ENCODE measurements at regions of chr18 and their contacts with region 1.

Region 1: DNA sequence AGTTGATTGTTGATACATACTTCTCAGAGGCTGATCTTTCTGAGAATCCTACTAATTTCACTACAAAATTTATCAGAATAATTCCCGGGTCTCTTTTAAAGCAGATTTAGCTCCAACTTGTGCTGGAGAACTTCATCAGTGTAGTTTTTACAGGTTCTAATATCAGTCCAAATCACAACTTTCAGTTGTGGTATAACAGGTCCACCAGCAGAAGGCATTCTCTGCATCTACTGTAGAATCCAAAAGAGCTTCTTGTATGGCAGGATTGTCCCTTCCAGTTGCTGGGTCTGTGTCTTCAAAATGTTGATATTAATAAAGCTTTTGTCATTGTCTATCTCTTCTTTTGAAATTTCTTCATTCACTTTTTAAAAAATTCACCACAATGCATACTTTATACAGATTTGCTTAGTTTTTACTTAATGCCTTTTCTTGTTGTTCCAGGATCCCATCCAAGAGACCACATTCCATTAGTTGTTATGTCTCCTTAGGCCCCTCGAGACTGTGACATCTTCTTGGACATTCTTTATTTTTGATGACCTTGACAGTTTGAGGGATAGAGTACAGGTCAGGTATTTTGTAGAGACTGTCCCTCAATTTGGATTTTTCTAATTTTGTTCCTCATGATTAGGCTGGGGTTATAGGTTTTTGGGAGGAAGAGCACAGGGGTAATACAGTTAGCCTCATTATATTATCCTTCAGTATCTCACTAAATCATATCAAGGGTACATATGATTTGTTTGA is 490.5 kb upstream of the MEX3C start:
- DNase-seq: no peak

Region 2: DNA sequence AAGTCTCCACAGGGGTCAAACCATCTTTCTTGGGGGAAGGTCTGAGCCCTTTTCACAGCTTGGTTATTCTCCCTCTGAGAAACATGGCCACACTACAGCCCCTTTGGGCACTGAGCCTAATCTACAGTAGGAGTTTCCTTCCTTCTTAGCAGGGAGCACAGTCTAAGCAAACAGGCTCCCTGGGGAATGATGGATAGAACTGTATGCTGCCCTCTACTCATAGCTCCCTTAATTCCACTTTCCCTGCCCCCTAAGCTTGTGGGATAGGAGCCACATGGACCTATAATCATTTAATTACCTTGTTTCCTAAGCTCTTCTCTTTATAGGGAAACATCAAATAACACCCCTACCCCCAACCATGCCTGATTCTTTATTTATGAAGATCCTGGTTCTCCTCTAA is 48.5 kb before region 1 on chr18:
- intact Hi-C with region 1: no loop called
- DNase-seq: no peak

Region 3: DNA sequence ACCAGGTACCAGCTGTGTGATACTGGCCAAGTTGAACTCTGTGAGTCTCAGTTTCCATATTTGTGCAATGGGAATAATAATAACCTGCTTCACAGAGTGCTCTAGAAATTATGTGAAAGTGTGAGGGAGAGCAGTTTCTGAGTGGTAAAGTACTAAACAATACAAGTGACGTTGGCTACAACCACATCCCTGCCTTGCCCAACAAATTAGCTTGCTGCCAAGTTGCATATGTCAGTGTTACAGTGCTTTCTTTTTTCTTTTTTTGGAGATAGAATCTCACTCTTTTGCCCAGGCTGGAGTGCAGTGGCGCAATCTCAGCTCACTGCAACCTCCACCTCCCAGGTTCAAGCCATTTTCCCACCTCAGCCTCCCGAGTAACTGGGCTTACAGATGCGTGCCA is 43.1 kb after region 1 on chr18:
- intact Hi-C with region 1: loop called (anchors 2 kb)
- DNase-seq: no peak

Measured in cardiac septum (tissue), 1 donor.